ENCODE measurements at regions of chr14 and their contacts with region 1.

Region 1: GRCh38 chr14:32076278-32077080 is 625 bp upstream of the ARHGAP5 start:
- DNase-seq: peak; percentile 98
- H3K4me3 ChIP-seq: peak overlapping the region; percentile 63 to 99 (median 71)
- H3K27ac ChIP-seq: peak overlapping the region; percentile 92
- H3K4me1 ChIP-seq: no peaks in the 10 kb centered on the region
- H3K27me3 ChIP-seq: no peaks in the 10 kb centered on the region
- CTCF ChIP-seq: no peak

Region 2: GRCh38 chr14:31926123-31926522 is 150.4 kb before region 1 on chr14:
- CTCF ChIA-PET with region 1: interaction called, 13 read pairs
- dilution Hi-C with region 1: no loop called
- in situ Hi-C with region 1: loop called in 1 of 2 experiments (anchors 10 kb)
- intact Hi-C with region 1: no loop called
- DNase-seq: no peak
- H3K4me3 ChIP-seq: no peak overlapping the region
- H3K27ac ChIP-seq: no peak overlapping the region
- H3K4me1 ChIP-seq: peaks cover 22% of the 10 kb centered on the region
- H3K27me3 ChIP-seq: no peaks in the 10 kb centered on the region
- CTCF ChIP-seq: peak; percentile 40 to 60

Region 3: DNA sequence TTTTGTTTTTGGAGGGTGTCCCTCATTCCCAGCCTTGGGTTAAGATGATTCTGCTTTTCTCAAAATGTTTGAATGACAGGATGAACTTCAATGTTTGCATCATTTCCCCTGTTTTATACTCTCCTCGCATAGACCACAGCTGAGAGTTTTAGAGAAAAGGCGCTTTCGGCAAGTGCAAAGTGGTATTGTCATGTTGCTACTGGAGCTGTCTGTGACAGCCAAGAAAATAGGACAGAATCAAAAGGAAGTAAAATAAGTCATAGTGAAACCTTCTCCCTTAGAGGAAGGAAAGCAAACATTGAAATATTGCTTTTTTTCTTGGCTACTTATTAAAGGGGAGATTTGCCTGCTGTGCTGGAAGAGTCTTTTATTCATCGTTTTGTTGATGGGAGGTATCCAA is 32.9 kb before region 1 on chr14:
- CTCF ChIA-PET with region 1: no interaction called
- dilution Hi-C with region 1: no loop called
- in situ Hi-C with region 1: no loop called
- intact Hi-C with region 1: no loop called
- DNase-seq: no peak
- H3K4me3 ChIP-seq: no peak overlapping the region
- H3K27ac ChIP-seq: no peak overlapping the region
- H3K4me1 ChIP-seq: no peaks in the 10 kb centered on the region
- H3K27me3 ChIP-seq: no peaks in the 10 kb centered on the region
- CTCF ChIP-seq: no peak

Region 4: DNA sequence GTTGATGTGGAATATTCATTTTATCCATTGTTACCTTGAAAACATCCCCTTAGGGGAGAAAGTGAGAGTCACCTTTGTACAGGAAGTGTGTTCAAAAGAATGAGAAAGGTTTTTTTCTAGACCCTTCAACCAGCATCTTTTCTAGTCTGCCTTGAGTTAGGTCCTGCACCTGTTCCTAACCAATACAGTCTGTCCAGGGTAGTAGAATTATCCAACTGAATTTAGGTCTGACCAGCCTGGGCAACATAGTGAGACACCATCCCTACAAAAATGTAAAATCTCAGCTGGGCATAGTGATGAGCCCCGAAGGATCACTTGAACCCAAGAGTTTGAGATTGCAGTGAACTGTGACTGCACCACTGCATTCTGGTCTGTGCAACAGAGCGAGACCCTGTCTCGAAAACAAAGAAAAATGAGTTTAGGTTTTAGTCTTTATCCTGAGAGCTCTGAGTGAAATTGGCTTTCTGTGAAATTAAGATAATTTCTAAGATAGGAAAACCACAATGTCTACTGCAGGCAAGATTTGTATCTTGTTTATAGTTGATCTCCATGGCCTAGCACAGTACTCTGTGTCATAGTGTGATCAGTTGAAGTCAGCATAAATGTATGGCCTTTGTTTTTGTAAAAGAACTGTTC is 25.8 kb after region 1 on chr14:
- CTCF ChIA-PET with region 1: no interaction called
- dilution Hi-C with region 1: no loop called
- in situ Hi-C with region 1: no loop called
- intact Hi-C with region 1: no loop called
- DNase-seq: no peak
- H3K4me3 ChIP-seq: no peak overlapping the region
- H3K27ac ChIP-seq: no peak overlapping the region
- H3K4me1 ChIP-seq: no peaks in the 10 kb centered on the region
- H3K27me3 ChIP-seq: no peaks in the 10 kb centered on the region
- CTCF ChIP-seq: no peak

Region 5: DNA sequence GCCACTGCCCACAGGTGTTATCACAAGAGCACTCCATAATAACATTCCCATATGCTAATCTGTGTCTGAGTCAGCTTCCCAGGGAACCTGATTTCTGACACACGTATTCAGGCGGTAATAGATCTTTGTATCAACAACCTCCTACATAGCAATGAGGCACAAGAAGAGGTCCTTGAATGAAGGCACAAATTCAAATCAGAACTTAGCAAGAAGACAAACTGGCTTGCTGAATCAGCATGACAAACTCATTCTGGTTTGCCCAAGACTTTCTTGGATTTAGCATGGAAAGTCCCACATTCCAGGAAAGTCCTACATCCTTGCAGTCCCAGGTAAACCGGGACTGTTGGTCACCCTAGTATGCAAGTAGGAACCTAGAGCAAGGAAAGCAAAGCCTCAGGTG is 91.4 kb after region 1 on chr14:
- CTCF ChIA-PET with region 1: no interaction called
- dilution Hi-C with region 1: no loop called
- in situ Hi-C with region 1: no loop called
- intact Hi-C with region 1: loop called (anchors 5 kb)
- DNase-seq: peak; percentile 58
- H3K4me3 ChIP-seq: no peak overlapping the region
- H3K27ac ChIP-seq: no peak overlapping the region
- H3K4me1 ChIP-seq: no peaks in the 10 kb centered on the region
- H3K27me3 ChIP-seq: no peaks in the 10 kb centered on the region
- CTCF ChIP-seq: no peak

Region 6: DNA sequence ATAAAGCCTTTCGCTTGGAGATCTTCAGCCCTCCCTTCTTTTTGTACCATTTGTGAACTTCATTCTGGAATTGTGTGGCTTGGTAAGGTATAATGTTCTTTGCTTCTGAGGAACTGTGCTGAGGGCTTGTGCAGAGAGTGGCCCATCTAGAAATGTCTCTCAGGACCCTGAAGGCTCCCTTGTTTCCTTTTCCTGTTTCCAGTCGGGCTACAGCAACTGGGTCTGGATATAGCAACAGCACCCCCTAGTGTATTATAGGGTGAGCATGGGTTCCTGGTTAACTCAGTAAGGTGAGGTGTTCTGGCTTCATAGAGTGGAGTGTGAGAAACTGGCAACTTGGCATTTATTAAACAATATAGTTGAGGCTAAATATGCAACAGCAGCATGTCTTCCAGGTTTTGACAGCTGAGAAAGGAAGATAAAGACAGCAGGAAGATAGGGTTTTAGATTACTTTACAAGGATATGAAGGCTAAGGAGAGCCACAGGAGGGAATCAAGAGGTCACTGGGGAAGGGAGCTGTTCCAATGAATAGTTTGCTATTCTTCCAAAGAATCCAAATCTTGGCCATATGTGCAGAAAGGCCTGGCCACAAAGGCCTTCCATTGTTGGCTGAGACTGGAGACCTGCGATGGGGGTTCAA is 175.7 kb after region 1 on chr14:
- CTCF ChIA-PET with region 1: interaction called, 7 read pairs
- dilution Hi-C with region 1: no loop called
- in situ Hi-C with region 1: no loop called
- intact Hi-C with region 1: loop called (anchors 1 kb)
- DNase-seq: peak; percentile 56
- H3K4me3 ChIP-seq: no peak overlapping the region
- H3K27ac ChIP-seq: no peak overlapping the region
- H3K4me1 ChIP-seq: peaks cover 11% of the 10 kb centered on the region
- H3K27me3 ChIP-seq: no peaks in the 10 kb centered on the region
- CTCF ChIP-seq: peak; percentile 90 to 95

Region 7: GRCh38 chr14:32469388-32470160 is 393.1 kb after region 1 on chr14:
- CTCF ChIA-PET with region 1: no interaction called
- dilution Hi-C with region 1: no loop called
- in situ Hi-C with region 1: loop called in 1 of 2 experiments (anchors 10 kb)
- intact Hi-C with region 1: loop called (anchors 1 kb)
- DNase-seq: peak; percentile 39
- H3K4me3 ChIP-seq: no peak overlapping the region
- H3K27ac ChIP-seq: peak overlapping the region; percentile 98
- H3K4me1 ChIP-seq: peaks cover 67% of the 10 kb centered on the region
- H3K27me3 ChIP-seq: no peaks in the 10 kb centered on the region
- CTCF ChIP-seq: peak; percentile 51 to 52

Measured in mammary epithelial cell (primary cell).